ENCODE measurements at regions of chr13 and their contacts with region 1.

Region 1: DNA sequence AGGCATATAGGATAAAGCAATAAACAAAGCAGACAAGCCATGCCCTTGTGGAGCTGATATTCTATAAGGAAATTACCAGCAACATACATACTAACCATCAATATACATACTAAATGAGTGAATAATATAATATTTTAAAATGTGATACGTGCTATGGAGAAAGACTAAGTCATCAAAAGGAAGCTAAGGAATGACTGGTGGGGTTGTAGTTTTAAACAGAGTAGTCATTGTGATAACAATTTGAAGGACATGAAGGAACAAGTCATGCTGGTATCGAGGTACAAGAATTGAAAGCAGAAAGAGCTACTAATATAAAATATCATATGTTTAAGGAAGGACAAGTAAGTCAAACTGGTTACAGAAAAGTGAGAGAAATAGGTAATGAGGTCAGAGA is 894.9 kb upstream of the PCDH9 start:
- DNase-seq: no peak
- ATAC-seq: no peak
- H3K4me3 ChIP-seq: no peak overlapping the region
- H3K27ac ChIP-seq: no peak overlapping the region
- H3K4me1 ChIP-seq: no peaks in the 10 kb centered on the region
- H3K27me3 ChIP-seq: no peaks in the 10 kb centered on the region
- CTCF ChIP-seq: no peak
- POLR2A ChIP-seq: no peak
- RAD21 ChIP-seq: no peak

Region 2: DNA sequence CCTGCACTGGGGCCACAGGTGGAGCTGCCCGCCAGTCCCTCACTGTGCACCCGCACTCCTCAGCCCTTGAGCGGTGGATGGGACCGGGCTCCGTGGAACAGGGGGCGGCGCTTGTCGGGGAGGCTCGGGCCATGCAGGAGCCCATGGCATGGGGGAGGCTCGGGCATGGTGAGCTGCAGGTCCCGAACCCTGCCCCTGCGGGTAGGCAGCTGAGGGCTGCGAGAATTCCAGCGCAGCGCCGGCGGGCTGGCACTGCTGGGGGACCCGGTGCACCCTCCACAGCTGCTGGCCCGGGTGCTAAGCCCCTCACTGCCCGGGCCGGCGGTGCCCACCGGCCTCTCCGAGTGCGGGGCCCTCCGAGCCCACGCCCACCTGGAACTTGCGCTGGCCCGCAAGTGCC is 17.4 kb before region 1 on chr13:
- CTCF ChIA-PET with region 1: no interaction called
- POLR2A ChIA-PET with region 1: no interaction called
- dilution Hi-C with region 1: no loop called
- in situ Hi-C with region 1: no loop called
- intact Hi-C with region 1: no loop called
- DNase-seq: no peak
- ATAC-seq: no peak
- H3K4me3 ChIP-seq: no peak overlapping the region
- H3K27ac ChIP-seq: no peak overlapping the region
- H3K4me1 ChIP-seq: no peaks in the 10 kb centered on the region
- H3K27me3 ChIP-seq: no peaks in the 10 kb centered on the region
- CTCF ChIP-seq: no peak
- POLR2A ChIP-seq: no peak
- RAD21 ChIP-seq: no peak

Region 3: DNA sequence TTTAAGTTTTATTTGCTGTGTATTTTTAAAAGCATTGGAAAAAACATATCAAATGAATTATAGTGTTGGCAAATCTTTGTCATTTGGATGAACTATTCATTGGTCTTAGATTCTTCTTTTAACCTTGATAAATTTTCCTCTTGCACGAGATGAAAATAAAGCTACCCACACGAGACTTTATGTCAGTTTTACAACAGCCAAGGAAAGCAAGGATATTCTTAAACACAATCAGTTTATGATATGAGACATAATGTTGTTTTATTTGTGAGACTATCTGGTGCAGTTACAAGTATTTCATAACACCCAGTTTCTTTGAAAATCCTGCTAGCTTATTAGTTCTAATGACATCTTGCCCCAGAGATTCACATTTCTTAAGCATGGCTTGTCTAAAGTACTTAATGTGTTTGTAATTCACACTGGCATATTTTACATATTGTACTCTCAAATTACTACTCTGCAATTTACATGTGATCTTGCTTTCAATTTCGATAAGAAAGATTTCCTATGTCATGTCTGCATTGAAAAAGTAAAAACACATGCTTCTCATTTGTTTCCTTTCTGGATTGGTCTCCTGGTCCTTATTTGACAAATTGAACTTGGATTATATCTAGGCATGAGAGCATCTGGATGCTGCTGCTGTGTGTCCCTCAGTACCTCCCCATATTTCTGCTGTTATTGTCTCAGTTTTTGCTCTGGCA is 60.5 kb after region 1 on chr13:
- CTCF ChIA-PET with region 1: no interaction called
- POLR2A ChIA-PET with region 1: no interaction called
- dilution Hi-C with region 1: no loop called
- in situ Hi-C with region 1: no loop called
- intact Hi-C with region 1: loop called (anchors 1 kb)
- DNase-seq: no peak
- ATAC-seq: no peak
- H3K4me3 ChIP-seq: no peak overlapping the region
- H3K27ac ChIP-seq: no peak overlapping the region
- H3K4me1 ChIP-seq: no peaks in the 10 kb centered on the region
- H3K27me3 ChIP-seq: no peaks in the 10 kb centered on the region
- CTCF ChIP-seq: no peak
- POLR2A ChIP-seq: no peak
- RAD21 ChIP-seq: no peak

Region 4: GRCh38 chr13:68417801-68418200 is 292.7 kb after region 1 on chr13:
- CTCF ChIA-PET with region 1: no interaction called
- POLR2A ChIA-PET with region 1: no interaction called
- dilution Hi-C with region 1: no loop called
- in situ Hi-C with region 1: no loop called
- intact Hi-C with region 1: no loop called
- DNase-seq: no peak
- ATAC-seq: no peak
- H3K4me3 ChIP-seq: no peak overlapping the region
- H3K27ac ChIP-seq: no peak overlapping the region
- H3K4me1 ChIP-seq: no peaks in the 10 kb centered on the region
- H3K27me3 ChIP-seq: no peaks in the 10 kb centered on the region
- CTCF ChIP-seq: no peak
- POLR2A ChIP-seq: no peak
- RAD21 ChIP-seq: no peak

Region 5: GRCh38 chr13:68816724-68817123 is 691.6 kb after region 1 on chr13:
- CTCF ChIA-PET with region 1: no interaction called
- POLR2A ChIA-PET with region 1: no interaction called
- dilution Hi-C with region 1: no loop called
- in situ Hi-C with region 1: no loop called
- intact Hi-C with region 1: no loop called
- DNase-seq: no peak
- ATAC-seq: no peak
- H3K4me3 ChIP-seq: no peak overlapping the region
- H3K27ac ChIP-seq: no peak overlapping the region
- H3K4me1 ChIP-seq: no peaks in the 10 kb centered on the region
- H3K27me3 ChIP-seq: no peaks in the 10 kb centered on the region
- CTCF ChIP-seq: no peak
- POLR2A ChIP-seq: no peak
- RAD21 ChIP-seq: no peak

Measured in IMR-90 (cell line).